Activated CD4-positive, alpha-beta memory T cell treated with anti-CD3 and anti-CD28 coated beads for 36 hours (primary cell): ENCODE measurements at regions of chr16 and their contacts with region 1.

Region 1: GRCh38 chr16:54286090-54286993 is at the start of gene IRX3:
- DNase-seq: no peak
- H3K4me3 Mint-ChIP-seq: peak within 1 kb of the TSS; percentile 59
- H3K27ac Mint-ChIP-seq: no peak within 1 kb of the TSS
- H3K4me1 Mint-ChIP-seq: peaks cover 31% of the 10 kb centered on the region
- H3K27me3 Mint-ChIP-seq: peaks cover 64% of the 10 kb centered on the region
- total RNA-seq, gene IRX3: 0.27 TPM in 1 of 2 experiments, not detected in the other

Region 2: DNA sequence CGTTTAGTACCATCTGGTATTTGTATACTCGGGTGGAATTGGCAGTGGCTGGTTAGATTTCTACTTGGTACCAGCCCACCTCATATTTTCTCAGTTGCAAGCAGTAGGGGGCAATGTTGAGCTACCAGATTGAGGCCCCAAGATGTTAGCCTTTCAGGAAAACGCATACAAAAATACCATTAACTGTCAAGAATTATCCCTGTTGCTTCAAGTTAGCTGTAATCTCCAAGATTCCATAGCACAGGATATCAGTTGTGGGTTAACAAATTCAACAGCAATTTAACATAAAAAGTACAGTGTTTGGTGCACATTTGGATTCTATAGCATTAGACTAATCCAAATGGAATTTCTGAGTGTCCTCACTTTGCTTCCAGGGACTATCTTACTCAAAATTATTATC is 394.2 kb before region 1 on chr16:
- CTCF ChIA-PET with region 1: interaction called, 3 read pairs
- POLR2A ChIA-PET with region 1: no interaction called
- intact Hi-C with region 1: loop called (anchors 2 kb)
- DNase-seq: peak; percentile 63
- H3K4me3 Mint-ChIP-seq: no peak overlapping the region
- H3K27ac Mint-ChIP-seq: no peak overlapping the region
- H3K4me1 Mint-ChIP-seq: peaks cover 11% of the 10 kb centered on the region
- H3K27me3 Mint-ChIP-seq: no peaks in the 10 kb centered on the region

Region 3: GRCh38 chr16:53945996-53946395 is 340.3 kb before region 1 on chr16:
- CTCF ChIA-PET with region 1: no interaction called
- POLR2A ChIA-PET with region 1: no interaction called
- intact Hi-C with region 1: loop called (anchors 10 kb)
- DNase-seq: no peak
- H3K4me3 Mint-ChIP-seq: no peak overlapping the region
- H3K27ac Mint-ChIP-seq: no peak overlapping the region
- H3K4me1 Mint-ChIP-seq: peaks cover 4% of the 10 kb centered on the region
- H3K27me3 Mint-ChIP-seq: no peaks in the 10 kb centered on the region